ENCODE measurements at regions of chr20 and their contacts with region 1.

Region 1: GRCh38 chr20:34955232-34956040 is at the starts of genes GSS and MYH7B:
- DNase-seq: peak; percentile 100
- ATAC-seq: peak; percentile 93
- total RNA-seq, gene GSS: 18.6 TPM
- total RNA-seq, gene MYH7B: 297 TPM

Region 2: DNA sequence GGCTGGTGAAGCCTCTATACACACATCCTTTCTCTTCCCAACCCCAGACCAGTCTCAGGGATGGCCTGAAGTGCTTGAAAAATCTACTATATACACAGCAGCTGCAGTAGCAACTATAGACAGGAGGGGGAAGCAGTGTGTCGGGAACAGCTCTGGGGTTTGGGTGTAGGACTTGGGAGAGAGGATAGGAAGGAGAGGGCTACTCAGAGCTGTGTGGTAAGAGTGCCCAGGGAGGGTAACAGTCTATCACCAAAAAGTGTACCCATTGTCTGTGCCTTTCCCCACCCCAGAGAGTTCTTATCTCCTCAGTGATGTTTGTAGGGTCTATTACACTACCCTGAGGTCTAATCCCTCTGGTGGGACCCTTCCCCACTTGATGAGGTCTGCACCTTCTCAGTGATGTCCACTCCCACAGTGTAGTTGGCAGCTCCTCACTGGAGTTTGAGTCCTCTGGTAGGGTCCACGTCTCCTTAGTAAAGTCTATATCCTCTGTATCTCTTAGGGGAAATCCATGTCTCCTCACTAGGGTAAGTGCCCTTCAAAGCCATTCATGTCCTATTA is 81.3 kb before region 1 on chr20:
- intact Hi-C with region 1: loop called (anchors 2 kb)
- DNase-seq: peak; percentile 67
- ATAC-seq: peak; percentile 55

Measured in left ventricle myocardium superior (tissue), 1 donor.